Psoas muscle (tissue), 8 donors: ENCODE measurements at regions of chr20 and their contacts with region 1.

Region 1: GRCh38 chr20:49713753-49714712 is at the start of gene B4GALT5:
- DNase-seq: peak; percentile 76 to 86
- ATAC-seq: peak; percentile 59 to 71 (median 67)
- H3K4me3 ChIP-seq: peak within 1 kb of the TSS; percentile 90
- H3K27ac ChIP-seq: peak within 1 kb of the TSS; percentile 94
- H3K4me1 ChIP-seq: peaks cover 45% of the 10 kb centered on the region
- H3K27me3 ChIP-seq: no peaks in the 10 kb centered on the region
- CTCF ChIP-seq: no peak
- total RNA-seq, gene B4GALT5: 49.3 to 284 (median 92.5) TPM

Region 2: GRCh38 chr20:49768204-49769047 is 54.4 kb after region 1 on chr20:
- intact Hi-C with region 1: loop called in 1 of 2 experiments (anchors 5 kb)
- DNase-seq: peak; percentile 69 to 72
- ATAC-seq: peak; percentile 65 to 74 (median 70)
- H3K4me3 ChIP-seq: no peak overlapping the region
- H3K27ac ChIP-seq: peak overlapping the region; percentile 71
- H3K4me1 ChIP-seq: peaks cover 38% of the 10 kb centered on the region
- H3K27me3 ChIP-seq: no peaks in the 10 kb centered on the region
- CTCF ChIP-seq: no peak

Region 3: DNA sequence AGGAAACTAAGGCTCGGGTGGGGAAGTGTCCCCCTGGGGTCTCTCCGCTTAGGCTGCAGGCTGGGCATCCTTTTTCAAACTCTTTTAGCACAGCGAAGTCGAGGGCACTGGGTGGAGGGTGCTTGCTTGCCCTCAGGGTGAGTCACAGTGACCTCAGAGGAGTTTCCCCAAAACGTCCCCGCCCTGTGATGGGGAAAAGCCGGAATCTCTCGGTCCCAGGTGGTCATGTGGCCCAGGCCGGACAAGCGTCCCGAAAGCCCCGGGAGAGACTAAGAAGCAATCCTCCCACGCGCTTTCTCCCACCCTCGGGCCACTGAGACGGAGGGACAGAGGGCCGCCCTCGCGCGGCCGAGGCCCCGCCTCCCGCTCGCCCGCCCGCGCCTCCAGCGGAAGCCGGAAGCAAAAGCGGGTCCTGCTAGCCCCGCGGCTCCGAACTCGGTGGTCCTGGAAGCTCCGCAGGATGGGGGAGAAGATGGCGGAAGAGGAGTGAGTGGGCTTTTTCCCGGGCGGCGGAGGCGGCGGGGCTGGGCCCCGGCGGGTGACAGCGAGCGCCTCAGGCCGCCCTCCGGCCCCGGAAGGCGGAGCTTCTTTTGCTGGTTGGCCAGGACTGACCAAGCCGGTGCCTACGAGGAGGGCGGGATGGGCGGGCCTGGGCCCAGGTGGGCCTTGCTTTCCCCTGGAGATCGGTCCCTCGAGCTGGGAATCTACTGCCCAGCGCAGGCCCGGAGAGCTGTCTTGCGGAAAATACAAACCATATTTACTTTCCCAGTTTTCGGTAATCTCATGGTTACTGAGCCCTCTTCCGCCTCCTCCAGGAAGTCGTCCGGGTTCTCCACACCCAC is 98.7 kb after region 1 on chr20 and contains the start of gene SLC9A8:
- intact Hi-C with region 1: loop called (anchors 5 kb)
- DNase-seq: peak; percentile 90 to 94
- ATAC-seq: peak; percentile 87 to 93 (median 90)
- H3K4me3 ChIP-seq: peak within 1 kb of the TSS; percentile 82
- H3K27ac ChIP-seq: peak within 1 kb of the TSS; percentile 98
- H3K4me1 ChIP-seq: peaks cover 29% of the 10 kb centered on the region
- H3K27me3 ChIP-seq: no peaks in the 10 kb centered on the region
- CTCF ChIP-seq: peak; percentile 45
- total RNA-seq, gene SLC9A8: 8.2 to 19.4 (median 11.2) TPM